ENCODE measurements at regions of chr6 and their contacts with region 1.

Region 1: DNA sequence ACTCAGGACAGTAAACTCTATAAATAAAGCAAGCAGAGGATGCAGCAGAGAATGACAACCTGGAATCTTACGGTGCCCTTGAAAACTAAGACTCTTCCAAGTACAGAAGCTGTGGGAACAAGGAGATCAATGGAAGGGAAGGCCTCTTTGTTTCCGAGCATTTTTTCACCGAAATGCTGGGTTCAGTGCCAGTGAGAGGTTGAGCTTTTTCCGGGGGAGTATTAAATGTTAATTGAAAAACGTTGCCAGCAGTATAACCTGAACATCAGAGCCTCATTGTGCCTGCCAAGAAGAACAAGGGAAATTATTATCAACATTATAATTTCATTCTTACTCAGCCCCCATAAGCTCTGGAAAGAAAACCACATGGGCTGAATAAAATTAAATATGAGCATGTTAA is 17.5 kb downstream of the OPRM1 start:
- DNase-seq: no peak
- ATAC-seq: no peak
- H3K4me3 ChIP-seq: no peak overlapping the region
- H3K27ac ChIP-seq: no peak overlapping the region
- H3K4me1 ChIP-seq: no peaks in the 10 kb centered on the region
- H3K27me3 ChIP-seq: no peaks in the 10 kb centered on the region
- CTCF ChIP-seq: no peak

Region 2: GRCh38 chr6:153976921-153977693 is 79.4 kb before region 1 on chr6:
- CTCF ChIA-PET with region 1: no interaction called
- POLR2A ChIA-PET with region 1: no interaction called
- in situ Hi-C with region 1: no loop called
- intact Hi-C with region 1: no loop called
- DNase-seq: no peak
- ATAC-seq: no peak
- H3K4me3 ChIP-seq: no peak overlapping the region
- H3K27ac ChIP-seq: no peak overlapping the region
- H3K4me1 ChIP-seq: no peaks in the 10 kb centered on the region
- H3K27me3 ChIP-seq: no peaks in the 10 kb centered on the region
- CTCF ChIP-seq: no peak

Region 3: DNA sequence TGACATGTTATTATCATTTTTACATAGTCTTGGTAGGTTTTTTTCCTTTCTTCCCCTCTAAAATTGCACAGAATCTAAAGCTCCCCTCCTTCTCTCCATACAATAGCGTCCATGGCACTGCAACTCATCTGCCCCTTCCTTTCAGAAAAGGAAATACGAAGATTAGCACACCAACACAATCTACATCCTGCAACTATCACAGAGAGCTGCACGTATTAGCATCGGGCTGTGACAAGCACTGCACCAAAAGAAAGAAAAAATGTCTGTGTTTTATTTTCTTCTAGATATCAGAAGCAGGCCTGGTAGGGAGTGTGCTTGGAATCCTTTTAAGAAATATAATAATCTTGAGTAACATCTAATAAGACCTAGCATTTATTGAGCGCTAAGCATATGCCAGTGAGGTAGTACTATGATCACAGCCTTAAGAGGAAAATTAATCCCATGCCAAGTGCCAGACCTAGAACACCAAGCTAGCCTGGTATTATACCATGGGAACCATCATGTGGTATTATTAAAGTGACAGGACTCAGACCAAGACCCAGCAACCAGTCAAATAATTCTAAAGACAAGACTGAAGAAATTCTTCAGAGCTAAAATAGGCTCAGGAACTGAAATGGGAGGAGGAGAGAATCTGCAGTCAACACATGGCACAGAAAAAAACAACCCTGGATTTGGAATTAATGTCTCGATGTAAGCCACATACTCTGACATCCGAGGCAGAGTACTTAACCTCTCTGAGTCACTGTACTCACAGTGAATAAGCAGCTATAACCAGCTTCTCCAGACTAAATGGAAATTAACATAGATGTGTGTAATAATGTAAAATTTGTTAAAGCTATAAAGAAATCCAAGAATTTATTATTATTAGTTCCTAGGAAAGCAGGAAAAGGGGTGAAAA is 175.7 kb after region 1 on chr6:
- CTCF ChIA-PET with region 1: no interaction called
- POLR2A ChIA-PET with region 1: interaction called, 11 read pairs
- in situ Hi-C with region 1: no loop called
- intact Hi-C with region 1: no loop called
- DNase-seq: no peak
- ATAC-seq: peak; percentile 82
- H3K4me3 ChIP-seq: peak overlapping the region in 1 of 2 experiments; percentile 10; a peak in 1 of 4 replicates
- H3K27ac ChIP-seq: no peak overlapping the region
- H3K4me1 ChIP-seq: peaks cover 6% of the 10 kb centered on the region; the same call in 1 of the 2 replicates
- H3K27me3 ChIP-seq: no peaks in the 10 kb centered on the region
- CTCF ChIP-seq: no peak